GM18951 (cell line): ENCODE measurements at regions of chr4 and their contacts with region 1.

Region 1: GRCh38 chr4:177047070-177047850 is 254.5 kb upstream of the VEGFC start:
- POLR2A ChIP-seq: no peak

Region 2: GRCh38 chr4:176377780-176378179 is 669.5 kb before region 1 on chr4:
- in situ Hi-C with region 1: loop called (anchors 10 kb)
- POLR2A ChIP-seq: no peak

Region 3: GRCh38 chr4:177605252-177605651 is 558.0 kb after region 1 on chr4:
- in situ Hi-C with region 1: no loop called
- POLR2A ChIP-seq: no peak